Activated naive CD4-positive, alpha-beta T cell treated with anti-CD3 and anti-CD28 coated beads for 36 hours (primary cell): ENCODE measurements at regions of chr1 and their contacts with region 1.

Region 1: GRCh38 chr1:11719313-11720032 is 16.5 kb upstream of the AGTRAP start:
- DNase-seq: peak; percentile 93
- H3K4me3 Mint-ChIP-seq: peak overlapping the region; percentile 80
- H3K27ac Mint-ChIP-seq: peak overlapping the region; percentile 80
- H3K4me1 Mint-ChIP-seq: peaks cover 14% of the 10 kb centered on the region
- H3K27me3 Mint-ChIP-seq: no peaks in the 10 kb centered on the region

Region 2: DNA sequence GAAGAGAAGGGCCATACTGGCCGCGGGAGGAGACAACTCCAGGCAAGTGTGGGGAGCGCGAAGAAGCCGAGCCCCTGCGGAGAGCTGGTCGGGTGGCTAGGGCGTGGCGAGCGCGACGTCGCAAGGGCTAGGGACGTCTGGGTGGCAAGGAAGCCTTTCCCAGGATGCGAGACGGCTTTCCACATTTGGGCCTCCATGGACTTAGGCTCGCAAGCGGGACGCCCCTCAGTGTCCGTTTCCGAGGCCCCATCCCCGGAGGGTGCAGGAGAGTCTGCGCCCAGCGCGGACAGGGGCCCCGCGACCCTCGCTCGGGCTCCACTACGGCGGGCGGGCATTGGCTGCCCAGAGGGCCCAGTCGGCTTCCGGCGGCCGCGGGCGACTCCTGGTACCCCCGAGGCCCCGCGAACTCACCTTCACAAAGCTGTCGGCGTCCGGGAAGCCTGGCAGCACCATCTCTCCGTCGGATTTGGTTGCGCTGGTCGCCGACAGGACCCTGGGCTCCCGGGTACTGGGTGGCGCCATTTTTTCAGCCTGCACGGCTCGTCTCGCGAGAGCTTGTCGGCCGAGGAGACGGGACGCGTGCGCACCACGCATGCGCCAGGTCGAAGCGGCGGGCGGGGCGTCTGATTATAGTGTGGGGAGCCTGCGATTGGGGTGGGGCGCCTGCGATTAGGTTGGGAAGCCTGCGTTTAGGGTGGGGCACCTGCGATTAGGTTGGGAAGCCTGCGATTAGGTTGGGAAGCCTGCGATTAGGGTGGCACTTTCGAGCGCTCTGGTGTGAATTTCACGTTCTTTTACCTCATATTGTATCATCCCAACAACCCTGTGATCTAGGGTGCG is 619.9 kb before region 1 on chr1 and contains the start of gene EXOSC10:
- CTCF ChIA-PET with region 1: no interaction called
- intact Hi-C with region 1: loop called (anchors 1 kb)
- DNase-seq: peak; percentile 95
- H3K4me3 Mint-ChIP-seq: peak within 1 kb of the TSS; percentile 96
- H3K27ac Mint-ChIP-seq: peak within 1 kb of the TSS; percentile 90
- H3K4me1 Mint-ChIP-seq: peaks cover 8% of the 10 kb centered on the region
- H3K27me3 Mint-ChIP-seq: no peaks in the 10 kb centered on the region
- total RNA-seq, gene EXOSC10: 57.9 to 59.3 TPM

Region 3: DNA sequence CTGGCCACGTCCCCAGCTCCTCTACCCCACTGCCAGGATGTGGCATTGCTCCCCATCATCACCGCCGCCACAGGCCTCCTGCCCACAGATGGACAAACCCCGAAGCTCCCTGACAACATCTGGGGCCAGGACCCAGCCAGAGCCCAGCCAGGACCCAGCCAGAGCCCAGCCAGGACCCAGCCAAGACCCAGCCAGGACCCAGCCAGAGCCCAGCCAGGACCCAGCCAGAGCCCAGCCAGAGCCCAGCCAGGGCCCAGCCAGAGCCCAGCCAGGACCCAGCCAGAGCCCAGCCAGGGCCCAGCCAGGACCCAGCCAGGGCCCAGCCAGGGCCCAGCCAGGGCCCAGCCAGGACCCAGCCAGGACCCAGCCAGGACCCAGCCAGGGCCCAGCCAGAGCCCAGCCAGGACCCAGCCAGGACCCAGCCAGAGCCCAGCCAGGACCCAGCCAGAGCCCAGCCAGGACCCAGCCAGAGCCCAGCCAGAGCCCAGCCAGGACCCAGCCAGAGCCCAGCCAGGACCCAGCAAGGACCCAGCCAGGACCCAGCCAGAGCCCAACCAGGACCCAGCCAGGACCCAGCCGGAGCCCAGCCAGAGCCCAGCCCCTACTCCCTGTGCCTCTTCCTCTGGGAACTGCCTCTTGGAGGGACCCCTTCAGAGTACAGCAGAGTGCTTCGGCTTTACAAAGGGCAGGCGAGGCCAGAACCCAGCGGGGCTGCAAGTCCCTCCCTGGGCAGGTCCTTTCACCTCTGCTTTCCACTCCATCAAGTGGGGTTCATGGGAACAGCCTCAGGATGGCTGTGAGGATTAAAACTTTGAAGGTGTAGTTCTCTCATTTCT is 196.9 kb before region 1 on chr1:
- CTCF ChIA-PET with region 1: no interaction called
- intact Hi-C with region 1: no loop called
- DNase-seq: no peak
- H3K4me3 Mint-ChIP-seq: no peak overlapping the region
- H3K27ac Mint-ChIP-seq: no peak overlapping the region
- H3K4me1 Mint-ChIP-seq: no peaks in the 10 kb centered on the region
- H3K27me3 Mint-ChIP-seq: no peaks in the 10 kb centered on the region

Region 4: GRCh38 chr1:11654137-11654938 is 65.1 kb before region 1 on chr1 and contains the starts of genes FBXO2 and FBXO44:
- CTCF ChIA-PET with region 1: interaction called, 18 read pairs
- intact Hi-C with region 1: loop called (anchors 1 kb)
- DNase-seq: peak; percentile 64
- H3K4me3 Mint-ChIP-seq: peak within 1 kb of the TSS; percentile 75
- H3K27ac Mint-ChIP-seq: no peak within 1 kb of the TSS
- H3K4me1 Mint-ChIP-seq: peaks cover 24% of the 10 kb centered on the region
- H3K27me3 Mint-ChIP-seq: no peaks in the 10 kb centered on the region
- total RNA-seq, gene FBXO2: 0.77 to 1.1 TPM
- total RNA-seq, gene FBXO44: 21.6 to 23.6 TPM

Region 5: DNA sequence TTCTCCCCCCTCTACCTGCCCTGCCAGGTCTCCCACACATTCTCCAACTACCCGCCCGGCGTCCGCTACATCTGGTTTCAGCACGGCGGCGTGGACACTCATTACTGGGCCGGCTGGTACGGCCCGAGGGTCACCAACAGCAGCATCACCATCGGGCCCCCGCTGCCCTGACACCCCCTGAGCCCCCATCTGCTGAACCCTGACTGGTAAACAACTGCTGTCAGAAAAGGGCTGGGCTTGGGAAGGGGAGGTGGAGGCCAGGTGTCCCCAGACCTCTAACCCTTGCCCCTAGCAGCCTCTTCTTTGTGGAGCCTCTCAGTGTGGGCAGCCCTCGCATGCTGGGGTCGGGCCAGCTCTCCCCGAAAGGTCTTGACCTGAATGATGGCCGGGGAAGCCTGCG is 58.4 kb before region 1 on chr1:
- CTCF ChIA-PET with region 1: interaction called, 28 read pairs
- intact Hi-C with region 1: loop called (anchors 1 kb)
- DNase-seq: no peak
- H3K4me3 Mint-ChIP-seq: no peak overlapping the region
- H3K27ac Mint-ChIP-seq: no peak overlapping the region
- H3K4me1 Mint-ChIP-seq: no peaks in the 10 kb centered on the region
- H3K27me3 Mint-ChIP-seq: no peaks in the 10 kb centered on the region

Region 6: DNA sequence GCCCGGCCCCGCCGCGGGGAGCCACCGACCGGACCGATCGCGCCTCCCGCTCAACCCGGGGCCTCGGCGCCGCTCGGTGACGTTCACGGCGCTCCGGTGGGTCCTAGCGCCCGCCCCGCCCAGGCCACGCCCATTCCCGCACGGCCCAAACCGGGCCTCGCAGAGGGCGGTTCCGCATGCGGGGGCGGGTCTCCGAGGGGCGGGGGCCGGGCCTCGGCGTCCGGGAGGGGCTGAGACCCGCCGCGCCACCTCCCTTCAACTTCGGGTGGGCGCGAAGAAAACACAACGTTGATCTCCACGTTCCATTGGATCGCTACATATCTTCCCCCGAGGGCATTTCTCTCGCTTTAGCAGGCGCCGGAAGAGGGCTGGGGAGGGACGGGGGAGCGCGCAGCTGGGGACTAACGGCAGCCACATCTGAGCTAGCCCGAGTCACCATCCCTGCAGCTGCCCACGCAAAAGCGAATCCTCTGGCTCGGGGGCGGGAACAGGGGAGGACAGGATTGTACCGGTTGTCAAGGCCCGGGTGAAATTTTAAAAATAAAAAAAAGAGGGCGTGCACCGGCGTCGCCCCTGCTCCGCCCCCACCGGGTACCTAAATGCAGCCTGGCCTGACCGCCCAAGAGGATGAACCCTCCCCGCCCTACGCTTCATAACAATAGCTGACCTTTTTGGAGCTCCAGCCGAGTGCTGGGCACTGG is 38.3 kb before region 1 on chr1 and contains the start of gene MAD2L2:
- CTCF ChIA-PET with region 1: interaction called, 9 read pairs
- intact Hi-C with region 1: loop called (anchors 1 kb)
- DNase-seq: peak; percentile 92
- H3K4me3 Mint-ChIP-seq: peak within 1 kb of the TSS; percentile 85
- H3K27ac Mint-ChIP-seq: peak within 1 kb of the TSS; percentile 88
- H3K4me1 Mint-ChIP-seq: peaks cover 10% of the 10 kb centered on the region
- H3K27me3 Mint-ChIP-seq: no peaks in the 10 kb centered on the region
- total RNA-seq, gene MAD2L2: 86.7 to 88.3 TPM

Region 7: DNA sequence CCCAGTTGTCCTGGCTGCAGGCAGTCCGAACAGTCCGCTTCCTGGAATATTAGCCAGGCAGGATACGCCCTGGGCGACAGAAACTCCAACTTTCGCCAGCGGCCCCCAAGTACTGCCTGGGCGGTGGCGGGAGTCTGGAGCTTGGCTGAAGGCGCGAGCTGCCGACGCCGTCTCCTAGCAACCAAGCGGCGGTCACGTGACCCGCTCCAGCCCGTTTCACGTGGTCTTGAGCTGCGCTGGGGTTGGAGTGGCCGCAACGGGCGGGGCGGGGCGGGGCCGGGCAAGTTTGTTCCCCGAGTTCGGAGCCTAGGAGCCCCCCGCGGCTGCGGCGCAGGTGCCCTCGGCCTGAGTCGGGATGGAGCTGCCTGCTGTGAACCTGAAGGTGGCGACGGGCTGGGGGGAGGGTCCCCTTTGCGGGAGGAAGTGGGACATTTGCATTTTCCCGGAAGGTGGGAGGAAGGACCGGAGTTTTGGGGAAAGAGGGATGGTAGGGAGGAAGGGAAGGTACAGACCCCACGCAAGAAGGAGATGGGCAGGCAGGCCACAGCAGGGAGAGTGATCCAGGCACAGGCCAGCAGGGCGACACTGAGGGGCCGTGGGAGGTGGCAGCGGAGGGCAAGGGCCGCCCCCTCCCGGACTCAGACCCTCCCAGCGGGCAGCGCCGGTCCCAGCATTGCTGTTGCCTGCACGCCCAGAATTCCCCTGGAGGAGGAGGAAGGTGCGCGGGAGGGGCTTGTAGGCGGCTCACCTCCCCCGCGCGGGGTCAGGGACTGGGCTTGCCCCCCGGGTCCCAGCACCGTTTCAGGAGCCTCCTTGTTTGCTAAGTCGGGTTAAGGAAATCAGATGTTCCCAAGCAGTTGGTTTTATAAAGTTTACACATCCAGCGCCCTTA is 16.6 kb after region 1 on chr1 and contains the start of gene AGTRAP:
- CTCF ChIA-PET with region 1: interaction called, 11 read pairs
- intact Hi-C with region 1: no loop called
- DNase-seq: peak; percentile 92
- H3K4me3 Mint-ChIP-seq: peak within 1 kb of the TSS; percentile 96
- H3K27ac Mint-ChIP-seq: peak within 1 kb of the TSS; percentile 93
- H3K4me1 Mint-ChIP-seq: peaks cover 51% of the 10 kb centered on the region
- H3K27me3 Mint-ChIP-seq: no peaks in the 10 kb centered on the region
- total RNA-seq, gene AGTRAP: 20.3 to 21.7 TPM

Region 8: DNA sequence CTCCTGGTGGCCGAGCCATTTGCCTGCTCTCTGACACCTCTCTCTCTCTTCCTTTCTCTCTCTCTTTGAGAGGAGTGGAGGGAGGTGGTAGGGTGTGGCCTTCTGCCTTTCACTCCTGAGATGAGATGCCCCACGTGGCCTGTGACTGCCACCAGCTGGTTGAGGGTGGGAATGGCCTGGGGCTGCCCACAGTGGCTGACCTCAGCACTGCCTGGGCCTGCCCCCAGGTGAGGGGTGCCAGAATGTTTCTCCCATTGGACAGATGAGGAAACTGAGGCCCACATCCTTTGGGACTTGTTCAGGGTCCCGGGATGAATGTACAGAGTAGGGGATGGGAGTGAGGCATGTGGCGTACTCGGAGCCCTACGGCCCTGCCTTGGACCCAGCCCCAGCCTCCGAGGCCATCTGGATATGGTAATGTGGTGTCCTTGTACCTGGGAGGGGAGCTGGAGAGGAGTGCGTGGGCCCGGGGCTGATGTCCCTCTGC is 29.8 kb after region 1 on chr1:
- CTCF ChIA-PET with region 1: no interaction called
- intact Hi-C with region 1: loop called (anchors 1 kb)
- DNase-seq: peak; percentile 76
- H3K4me3 Mint-ChIP-seq: no peak overlapping the region
- H3K27ac Mint-ChIP-seq: no peak overlapping the region
- H3K4me1 Mint-ChIP-seq: peaks cover 12% of the 10 kb centered on the region
- H3K27me3 Mint-ChIP-seq: no peaks in the 10 kb centered on the region